MCF 10A (cell line): ENCODE measurements at regions of chr11 and their contacts with region 1.

Region 1: GRCh38 chr11:120413480-120413879 is 77.3 kb downstream of the ARHGEF12 start:
- DNase-seq: peak; percentile 20
- H3K4me3 Mint-ChIP-seq: peak overlapping the region; percentile 13
- H3K27ac Mint-ChIP-seq: peak overlapping the region; percentile 55
- H3K4me1 Mint-ChIP-seq: peaks cover 21% of the 10 kb centered on the region
- H3K27me3 Mint-ChIP-seq: no peaks in the 10 kb centered on the region
- CTCF ChIP-seq: no peak

Region 2: GRCh38 chr11:120316842-120317688 is 96.4 kb before region 1 on chr11:
- CTCF ChIA-PET with region 1: no interaction called
- POLR2A ChIA-PET with region 1: no interaction called
- intact Hi-C with region 1: no loop called
- DNase-seq: peak; percentile 76
- H3K4me3 Mint-ChIP-seq: peak overlapping the region; percentile 11
- H3K27ac Mint-ChIP-seq: peak overlapping the region; percentile 57
- H3K4me1 Mint-ChIP-seq: peaks cover 24% of the 10 kb centered on the region
- H3K27me3 Mint-ChIP-seq: no peaks in the 10 kb centered on the region
- CTCF ChIP-seq: no peak

Region 3: DNA sequence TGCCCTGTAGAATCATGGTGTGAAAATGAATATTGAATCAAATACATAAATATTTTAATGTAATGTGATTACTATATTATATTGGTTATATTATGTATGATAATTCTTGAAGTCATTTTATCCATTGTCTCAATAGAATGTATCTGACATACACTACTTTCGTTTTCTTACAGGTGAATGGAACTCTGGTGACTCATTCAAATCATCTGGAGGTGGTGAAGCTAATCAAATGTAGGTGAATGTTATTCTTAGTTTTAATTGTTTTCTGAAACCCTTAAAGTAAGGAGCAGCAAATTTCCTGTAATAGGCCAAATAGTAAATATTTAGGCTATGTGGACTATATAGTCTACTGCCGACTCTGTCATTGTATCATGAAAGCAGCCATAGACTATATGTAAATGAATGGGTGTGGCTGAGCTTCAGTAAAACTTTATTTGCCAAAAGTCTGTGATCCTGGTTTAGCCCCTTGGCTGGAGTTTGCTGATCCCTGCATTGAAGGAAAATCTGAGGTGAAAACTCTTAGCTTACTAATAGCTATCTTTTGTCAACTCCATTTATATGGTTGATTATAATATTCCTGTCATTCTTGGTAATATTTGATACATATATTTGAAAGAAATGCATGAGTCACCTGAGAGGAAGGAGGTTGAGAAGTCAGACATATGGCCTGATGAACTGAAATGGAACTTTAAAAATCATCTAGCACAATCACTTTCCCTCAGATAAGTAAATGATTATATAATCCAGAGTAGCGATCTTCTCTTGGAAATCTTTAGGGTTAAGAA is 10.9 kb after region 1 on chr11:
- CTCF ChIA-PET with region 1: interaction called, 3 read pairs
- POLR2A ChIA-PET with region 1: interaction called, 13 read pairs
- intact Hi-C with region 1: no loop called
- DNase-seq: peak; percentile 35
- H3K4me3 Mint-ChIP-seq: peak overlapping the region; percentile 38
- H3K27ac Mint-ChIP-seq: no peak overlapping the region
- H3K4me1 Mint-ChIP-seq: peaks cover 8% of the 10 kb centered on the region
- H3K27me3 Mint-ChIP-seq: no peaks in the 10 kb centered on the region
- CTCF ChIP-seq: no peak

Region 4: DNA sequence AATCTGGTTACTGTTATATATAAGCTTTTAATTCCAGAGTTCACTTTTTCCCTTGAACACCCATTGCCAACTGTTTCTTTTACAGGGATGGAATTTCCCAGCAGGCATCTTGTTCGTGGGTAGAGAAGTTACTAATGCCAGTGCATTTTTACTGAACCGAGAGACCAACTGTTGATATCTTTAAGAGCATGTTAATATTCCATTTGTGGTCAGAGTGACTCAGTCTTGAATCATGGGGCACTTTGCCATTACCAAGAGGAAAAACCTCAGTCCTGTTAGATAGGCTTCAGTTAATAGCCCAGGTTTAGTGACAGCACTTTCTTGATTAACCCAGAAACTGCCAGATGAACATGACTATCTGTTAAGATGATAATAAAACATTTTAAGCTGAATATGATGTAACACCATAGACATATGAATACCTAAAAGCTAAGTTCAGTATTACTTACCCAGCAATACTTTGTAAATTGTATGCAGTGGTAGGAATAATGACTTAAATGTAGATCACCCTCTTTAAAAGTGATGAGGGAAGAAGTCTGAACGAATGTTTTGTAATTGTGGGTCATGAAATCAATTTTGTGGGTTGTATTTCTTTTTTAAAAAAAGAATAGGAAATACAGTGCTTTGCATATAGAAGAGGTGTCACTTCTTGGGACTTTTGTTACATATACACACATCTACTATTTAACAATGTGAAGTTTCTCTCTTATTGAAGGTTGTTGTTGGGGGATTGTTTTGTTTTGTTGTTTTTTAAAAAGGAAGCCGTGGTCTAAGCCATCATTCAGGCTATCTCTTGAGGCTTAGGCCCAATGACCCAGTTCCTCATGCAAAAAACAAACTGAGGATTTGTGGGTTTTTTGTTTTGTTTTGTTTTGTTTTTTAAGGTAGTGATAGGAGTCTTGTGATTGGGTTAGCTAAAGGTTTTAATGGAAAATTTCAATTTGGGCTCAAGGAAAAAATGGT is 18.9 kb after region 1 on chr11:
- CTCF ChIA-PET with region 1: interaction called, 3 read pairs
- POLR2A ChIA-PET with region 1: interaction called, 16 read pairs
- intact Hi-C with region 1: no loop called
- DNase-seq: peak; percentile 96
- H3K4me3 Mint-ChIP-seq: peak overlapping the region; percentile 65
- H3K27ac Mint-ChIP-seq: peak overlapping the region; percentile 89
- H3K4me1 Mint-ChIP-seq: peaks cover 15% of the 10 kb centered on the region
- H3K27me3 Mint-ChIP-seq: no peaks in the 10 kb centered on the region
- CTCF ChIP-seq: no peak

Region 5: DNA sequence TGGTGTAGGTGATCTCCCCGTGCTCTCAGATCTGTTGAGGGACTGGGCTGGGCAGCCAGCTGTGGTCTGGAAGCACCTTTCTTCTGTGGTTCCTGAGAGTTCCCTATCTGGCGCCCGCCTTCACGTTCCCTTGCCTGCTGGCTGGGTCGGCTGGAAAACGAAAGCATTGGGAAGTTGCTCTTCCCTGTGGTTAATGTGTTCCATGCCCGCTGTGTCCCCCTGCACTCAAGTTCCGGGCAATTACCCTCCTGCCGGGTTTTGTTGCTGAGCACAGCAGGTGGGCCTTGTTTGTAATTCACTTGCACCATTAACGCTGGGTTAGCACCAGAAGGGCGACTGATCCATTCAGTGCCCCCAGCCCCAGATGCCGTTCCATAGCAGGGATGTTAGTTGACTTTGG is 232.2 kb after region 1 on chr11:
- CTCF ChIA-PET with region 1: no interaction called
- POLR2A ChIA-PET with region 1: no interaction called
- intact Hi-C with region 1: no loop called
- DNase-seq: no peak
- H3K4me3 Mint-ChIP-seq: no peak overlapping the region
- H3K27ac Mint-ChIP-seq: no peak overlapping the region
- H3K4me1 Mint-ChIP-seq: no peaks in the 10 kb centered on the region
- H3K27me3 Mint-ChIP-seq: peaks cover 66% of the 10 kb centered on the region
- CTCF ChIP-seq: no peak

Region 6: GRCh38 chr11:120710354-120711131 is 297.1 kb after region 1 on chr11:
- CTCF ChIA-PET with region 1: no interaction called
- POLR2A ChIA-PET with region 1: no interaction called
- intact Hi-C with region 1: no loop called
- DNase-seq: peak; percentile 83
- H3K4me3 Mint-ChIP-seq: no peak overlapping the region
- H3K27ac Mint-ChIP-seq: no peak overlapping the region
- H3K4me1 Mint-ChIP-seq: peaks cover 6% of the 10 kb centered on the region
- H3K27me3 Mint-ChIP-seq: no peaks in the 10 kb centered on the region
- CTCF ChIP-seq: no peak